Left ventricle myocardium inferior (tissue), 1 donor: ENCODE measurements at regions of chr10 and their contacts with region 1.

Region 1: GRCh38 chr10:122298598-122299301 is 27.7 kb downstream of the BTBD16 start:
- DNase-seq: peak; percentile 63
- H3K4me3 ChIP-seq: peak overlapping the region; percentile 41
- H3K27ac ChIP-seq: no peak overlapping the region
- H3K4me1 ChIP-seq: peaks cover 8% of the 10 kb centered on the region
- H3K27me3 ChIP-seq: no peaks in the 10 kb centered on the region
- CTCF ChIP-seq: peak; percentile 93

Region 2: DNA sequence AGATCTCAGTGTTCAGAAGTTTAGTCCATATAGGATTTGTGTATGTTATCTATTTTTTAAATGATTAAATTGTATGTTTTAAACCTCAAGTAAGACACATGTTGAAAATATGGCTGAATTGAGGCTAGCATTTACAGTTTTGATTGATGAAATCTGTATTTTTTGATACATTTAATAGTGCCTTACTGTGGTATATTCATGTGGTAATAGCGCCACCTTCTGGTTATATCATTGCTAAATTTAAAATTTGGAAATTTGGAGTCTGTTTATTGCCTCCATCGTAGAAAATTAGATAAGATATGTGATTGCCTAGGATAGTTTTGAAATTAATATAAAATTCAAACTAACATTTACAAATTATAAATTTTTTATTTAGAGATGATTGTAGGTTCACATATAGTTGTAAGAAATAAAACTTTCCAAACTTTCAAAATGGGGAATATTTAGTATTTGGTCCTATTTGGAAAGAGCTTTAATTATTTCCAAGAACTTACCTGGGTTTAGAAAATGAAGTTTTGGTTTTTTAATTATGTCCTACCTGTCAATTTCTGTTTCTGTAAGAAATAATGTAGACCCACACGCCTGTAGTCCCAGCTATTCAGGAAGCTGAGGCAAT is 136.6 kb after region 1 on chr10:
- intact Hi-C with region 1: loop called (anchors 2 kb)
- DNase-seq: no peak
- H3K4me3 ChIP-seq: no peak overlapping the region
- H3K27ac ChIP-seq: no peak overlapping the region
- H3K4me1 ChIP-seq: no peaks in the 10 kb centered on the region
- H3K27me3 ChIP-seq: no peaks in the 10 kb centered on the region
- CTCF ChIP-seq: peak; percentile 74

Region 3: GRCh38 chr10:122565728-122566206 is 267.0 kb after region 1 on chr10:
- intact Hi-C with region 1: loop called (anchors 5 kb)
- DNase-seq: peak; percentile 77
- H3K4me3 ChIP-seq: peak overlapping the region; percentile 38
- H3K27ac ChIP-seq: no peak overlapping the region
- H3K4me1 ChIP-seq: peaks cover 7% of the 10 kb centered on the region
- H3K27me3 ChIP-seq: peaks cover 23% of the 10 kb centered on the region
- CTCF ChIP-seq: peak; percentile 90